Uterus (tissue), 4 donors: ENCODE measurements at regions of chr19 and their contacts with region 1.

Region 1: DNA sequence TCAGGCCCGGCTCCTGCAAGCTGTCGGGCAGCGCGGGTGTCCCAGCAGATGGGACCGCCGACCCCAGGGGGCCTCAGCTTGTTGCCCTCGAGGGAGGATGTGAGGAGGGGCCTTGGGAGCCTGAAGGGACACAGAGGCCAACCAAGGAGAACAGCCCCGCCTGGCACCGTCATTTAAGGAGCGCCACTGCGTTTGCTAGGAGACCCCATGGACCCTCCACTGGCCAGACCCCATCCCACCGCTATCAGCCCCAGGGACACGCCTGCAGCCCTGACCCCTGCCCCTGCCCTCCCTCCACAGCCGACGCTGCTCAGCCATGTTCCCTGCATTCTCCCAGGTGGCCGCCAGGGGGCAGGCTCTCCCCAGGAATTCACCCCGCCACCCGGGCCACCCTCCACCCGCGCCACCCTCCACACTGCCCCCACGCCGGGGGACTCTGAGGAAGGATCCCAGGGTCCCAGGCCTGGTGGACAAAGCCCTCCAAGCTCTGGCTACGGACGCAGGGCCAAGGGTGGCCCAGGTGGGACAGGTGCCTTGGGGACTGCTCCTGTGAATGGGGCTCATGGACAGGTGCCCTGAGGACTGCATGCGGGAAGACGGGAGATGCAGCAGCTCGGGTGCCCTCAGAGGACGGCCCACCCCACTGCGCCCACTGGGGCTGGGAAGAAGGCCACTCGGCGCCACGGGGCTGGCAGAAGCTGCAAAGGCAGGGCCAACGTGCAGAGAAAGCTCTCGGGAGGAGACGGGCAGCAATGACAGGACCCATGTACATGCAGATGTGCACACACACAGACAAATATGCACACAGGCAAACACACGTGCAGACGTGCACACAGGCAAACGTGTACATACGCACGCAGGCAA is 34.4 kb downstream of the PIP5K1C start:
- DNase-seq: peak; percentile 67 to 79
- H3K4me3 ChIP-seq: no peak overlapping the region
- H3K27ac ChIP-seq: peak overlapping the region in 1 of 2 donors; percentile 10
- H3K4me1 ChIP-seq: peaks cover 8 to 24% of the 10 kb centered on the region in 2 donors
- H3K27me3 ChIP-seq: no peaks in the 10 kb centered on the region
- CTCF ChIP-seq: peak; percentile 96 to 99 (median 96)
- POLR2A ChIP-seq: no peak

Region 2: DNA sequence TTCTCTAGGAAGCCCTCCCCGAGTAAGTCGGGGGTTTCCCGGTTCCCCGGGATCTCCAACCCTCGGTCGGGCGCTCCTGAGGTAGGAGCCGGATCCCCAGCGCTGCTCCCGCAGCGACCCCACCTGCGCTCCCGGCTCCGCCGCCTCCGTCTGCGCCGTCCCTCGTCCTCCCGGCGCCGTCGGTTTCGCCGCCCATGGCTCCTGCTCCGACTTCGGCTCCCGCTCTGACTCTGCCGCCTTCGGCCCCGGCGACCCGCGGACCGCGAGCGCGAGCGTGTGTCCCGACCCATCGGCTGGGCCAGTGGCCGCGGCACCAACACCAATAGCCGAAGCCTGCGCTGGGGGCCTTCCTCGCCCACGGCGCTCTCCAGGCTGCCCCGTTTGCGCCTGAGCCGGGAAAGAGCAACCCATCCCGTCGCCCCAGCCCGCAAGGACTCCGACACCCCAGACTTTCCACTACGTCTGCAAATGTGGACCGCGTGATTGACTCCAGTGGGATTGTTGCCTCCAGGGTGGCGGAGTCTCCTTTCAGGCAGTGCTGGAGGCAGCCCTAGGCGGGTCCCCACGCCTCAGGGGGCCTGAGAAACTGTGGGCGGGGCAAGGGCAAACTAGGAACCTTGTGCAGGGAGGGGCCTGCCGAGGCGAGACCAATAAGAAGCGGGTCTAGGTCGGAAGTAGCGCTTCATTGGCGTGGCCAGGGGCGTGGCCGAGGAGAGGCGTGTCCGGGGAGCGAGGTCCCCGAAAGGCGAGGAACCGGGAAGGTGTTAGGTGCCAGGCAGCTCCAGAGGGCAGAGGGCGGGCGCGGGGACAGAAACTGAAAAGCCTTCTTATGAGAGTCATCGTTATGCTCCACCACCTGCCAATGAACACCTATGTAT is 39.2 kb before region 1 on chr19 and contains the start of gene CACTIN:
- intact Hi-C with region 1: no loop called
- DNase-seq: peak; percentile 98 to 99
- H3K4me3 ChIP-seq: peak within 1 kb of the TSS; percentile 87 to 89
- H3K27ac ChIP-seq: peak within 1 kb of the TSS; percentile 91 to 92
- H3K4me1 ChIP-seq: peaks cover 7 to 10% of the 10 kb centered on the region in 2 donors
- H3K27me3 ChIP-seq: no peaks in the 10 kb centered on the region
- CTCF ChIP-seq: peak in 2 of 4 experiments; percentile 51 to 53
- POLR2A ChIP-seq: peak; percentile 32 to 78
- total RNA-seq, gene CACTIN: 6.8 to 28.4 (median 20.7) TPM

Region 3: DNA sequence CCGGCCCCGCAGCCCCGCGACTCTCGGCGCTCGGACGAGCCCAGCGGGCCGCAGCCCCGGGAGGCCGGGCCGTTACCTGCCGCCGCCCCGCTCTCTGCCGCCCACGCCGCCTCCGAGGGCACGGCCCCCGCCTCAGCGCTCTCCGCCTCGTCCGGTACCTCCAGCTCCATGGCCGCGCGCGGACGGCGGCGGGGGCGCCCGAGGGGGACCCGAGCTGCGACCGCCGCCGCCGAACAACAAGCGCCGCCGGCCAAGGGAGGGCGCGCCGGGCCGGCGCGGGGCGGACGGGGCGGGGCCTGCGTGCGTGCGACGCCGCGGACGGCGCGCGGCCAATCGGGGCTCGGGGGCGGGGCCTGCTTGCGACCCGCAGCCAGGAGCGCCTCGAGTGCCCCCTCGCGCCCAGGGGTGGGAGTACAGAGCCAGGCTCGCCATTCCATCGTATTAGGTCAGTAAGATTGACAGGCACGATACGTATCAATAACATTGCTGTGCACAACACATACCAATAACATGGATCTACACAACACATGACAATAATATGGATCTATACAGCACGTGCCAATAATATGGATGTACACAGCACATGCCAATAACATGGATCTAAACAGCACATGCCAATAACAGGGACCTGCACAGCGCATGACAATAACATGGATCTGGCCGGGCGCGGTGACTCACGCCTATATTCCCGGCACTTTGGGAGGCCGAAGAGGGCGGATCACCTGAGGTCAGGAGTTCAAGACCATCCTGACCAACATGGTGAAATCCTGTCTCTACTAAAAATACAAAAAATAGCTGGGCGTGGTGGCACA is 34.5 kb after region 1 on chr19 and contains the start of gene PIP5K1C:
- intact Hi-C with region 1: loop called (anchors 2 kb)
- DNase-seq: peak; percentile 84 to 89
- H3K4me3 ChIP-seq: peak within 1 kb of the TSS; percentile 61 to 88
- H3K27ac ChIP-seq: peak within 1 kb of the TSS; percentile 80 to 88
- H3K4me1 ChIP-seq: peaks cover 0 to 10% of the 10 kb centered on the region in 2 donors
- H3K27me3 ChIP-seq: no peaks in the 10 kb centered on the region
- CTCF ChIP-seq: peak; percentile 72 to 99 (median 92)
- POLR2A ChIP-seq: peak; percentile 85 to 90
- total RNA-seq, gene PIP5K1C: 6.2 to 77.5 (median 33.2) TPM